Activated CD8-positive, alpha-beta memory T cell treated with anti-CD3 and anti-CD28 coated beads, Interleukin-2, amount 10 ng/mL, durations not matched to agents 7 days and 5 days (primary cell): ENCODE measurements at regions of chr6 and their contacts with region 1.

Region 1: GRCh38 chr6:135054569-135055498 is at the start of gene HBS1L:
- DNase-seq: peak; percentile 99
- ATAC-seq: peak; percentile 98
- H3K4me3 Mint-ChIP-seq: peak within 1 kb of the TSS; percentile 95
- H3K27ac Mint-ChIP-seq: peak within 1 kb of the TSS; percentile 92
- H3K4me1 Mint-ChIP-seq: peaks cover 37% of the 10 kb centered on the region
- H3K27me3 Mint-ChIP-seq: no peaks in the 10 kb centered on the region
- total RNA-seq, gene HBS1L: 92.2 to 112 TPM

Region 2: DNA sequence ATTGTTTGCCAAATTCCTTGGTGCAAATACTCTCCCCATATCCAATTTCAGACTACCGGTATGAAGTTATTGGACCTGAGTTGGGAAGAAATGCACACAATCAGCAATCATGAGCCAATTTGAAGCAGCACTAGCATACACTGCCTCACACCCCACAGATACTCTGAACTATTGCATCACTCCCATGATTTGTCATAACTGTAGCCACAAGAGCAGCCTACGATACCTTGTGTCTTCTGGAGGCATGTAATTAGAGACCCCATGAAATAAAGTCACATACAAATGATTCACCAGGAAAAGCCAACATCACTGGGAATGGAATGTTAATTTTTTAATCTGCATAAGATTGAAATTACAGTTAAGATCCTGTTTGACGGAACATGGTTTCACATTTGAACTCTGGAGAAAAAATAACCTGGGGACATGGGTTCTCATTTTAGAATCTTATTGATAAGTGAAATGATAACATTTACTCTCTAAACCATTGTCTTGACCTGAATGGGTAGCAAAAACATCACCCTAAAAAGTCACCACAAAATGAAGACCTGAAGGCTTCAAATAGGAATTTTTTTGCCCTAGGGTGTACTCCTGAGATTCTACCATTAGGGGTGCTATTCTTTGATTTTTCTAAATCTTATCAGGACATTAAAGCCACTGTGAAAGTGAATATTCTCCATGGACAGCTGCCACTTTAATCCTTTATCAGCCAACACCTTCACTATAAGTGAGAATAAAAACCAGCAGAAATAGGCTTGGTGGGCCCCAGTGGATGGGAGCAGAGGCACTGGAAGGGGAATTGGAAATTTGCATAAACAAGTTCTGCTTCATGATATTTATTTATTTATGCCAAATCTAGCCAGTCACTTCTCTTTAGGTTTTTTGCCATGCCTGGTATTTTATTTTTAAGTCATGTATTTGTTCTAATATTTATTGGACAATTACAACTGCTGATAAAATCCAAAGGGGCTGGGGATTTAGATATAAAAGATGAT is 34.3 kb after region 1 on chr6:
- CTCF ChIA-PET with region 1: interaction called, 20 read pairs
- DNase-seq: peak; percentile 79
- ATAC-seq: peak; percentile 87
- H3K4me3 Mint-ChIP-seq: peak overlapping the region; percentile 71
- H3K27ac Mint-ChIP-seq: peak overlapping the region; percentile 89
- H3K4me1 Mint-ChIP-seq: peaks cover 84% of the 10 kb centered on the region
- H3K27me3 Mint-ChIP-seq: no peaks in the 10 kb centered on the region